ENCODE measurements at regions of chr16 and their contacts with region 1.

Region 1: GRCh38 chr16:57383276-57384247 is 11.3 kb downstream of the CX3CL1 start:
- DNase-seq: no peak
- ATAC-seq: no peak
- H3K4me3 Mint-ChIP-seq: peak overlapping the region; percentile 1
- H3K27ac Mint-ChIP-seq: peak overlapping the region; percentile 84
- H3K4me1 Mint-ChIP-seq: peaks cover 70% of the 10 kb centered on the region
- H3K27me3 Mint-ChIP-seq: no peaks in the 10 kb centered on the region
- CTCF ChIP-seq: no peak

Region 2: GRCh38 chr16:57349212-57350031 is 34.1 kb before region 1 on chr16:
- CTCF ChIA-PET with region 1: no interaction called
- POLR2A ChIA-PET with region 1: interaction called, 12 read pairs
- intact Hi-C with region 1: loop called (anchors 2 kb)
- DNase-seq: peak; percentile 51
- ATAC-seq: peak; percentile 99
- H3K4me3 Mint-ChIP-seq: peak overlapping the region; percentile 62
- H3K27ac Mint-ChIP-seq: peak overlapping the region; percentile 31
- H3K4me1 Mint-ChIP-seq: peaks cover 43% of the 10 kb centered on the region
- H3K27me3 Mint-ChIP-seq: peaks cover 8% of the 10 kb centered on the region
- CTCF ChIP-seq: no peak

Region 3: GRCh38 chr16:57403965-57404817 is 20.6 kb after region 1 on chr16 and contains the start of gene CCL17:
- CTCF ChIA-PET with region 1: no interaction called
- POLR2A ChIA-PET with region 1: interaction called, 6 read pairs
- intact Hi-C with region 1: loop called (anchors 1 kb)
- DNase-seq: no peak
- ATAC-seq: no peak
- H3K4me3 Mint-ChIP-seq: no peak within 1 kb of the TSS
- H3K27ac Mint-ChIP-seq: no peak within 1 kb of the TSS
- H3K4me1 Mint-ChIP-seq: peaks cover 33% of the 10 kb centered on the region
- H3K27me3 Mint-ChIP-seq: no peaks in the 10 kb centered on the region
- CTCF ChIP-seq: no peak
- total RNA-seq, gene CCL17: 6.7 and 7.0 TPM in 2 replicates

Measured in activated B cell treated with CpG ODN at 0.5 μM for 24 hours (primary cell).